ENCODE measurements at regions of chr2 and their contacts with region 1.

Region 1: DNA sequence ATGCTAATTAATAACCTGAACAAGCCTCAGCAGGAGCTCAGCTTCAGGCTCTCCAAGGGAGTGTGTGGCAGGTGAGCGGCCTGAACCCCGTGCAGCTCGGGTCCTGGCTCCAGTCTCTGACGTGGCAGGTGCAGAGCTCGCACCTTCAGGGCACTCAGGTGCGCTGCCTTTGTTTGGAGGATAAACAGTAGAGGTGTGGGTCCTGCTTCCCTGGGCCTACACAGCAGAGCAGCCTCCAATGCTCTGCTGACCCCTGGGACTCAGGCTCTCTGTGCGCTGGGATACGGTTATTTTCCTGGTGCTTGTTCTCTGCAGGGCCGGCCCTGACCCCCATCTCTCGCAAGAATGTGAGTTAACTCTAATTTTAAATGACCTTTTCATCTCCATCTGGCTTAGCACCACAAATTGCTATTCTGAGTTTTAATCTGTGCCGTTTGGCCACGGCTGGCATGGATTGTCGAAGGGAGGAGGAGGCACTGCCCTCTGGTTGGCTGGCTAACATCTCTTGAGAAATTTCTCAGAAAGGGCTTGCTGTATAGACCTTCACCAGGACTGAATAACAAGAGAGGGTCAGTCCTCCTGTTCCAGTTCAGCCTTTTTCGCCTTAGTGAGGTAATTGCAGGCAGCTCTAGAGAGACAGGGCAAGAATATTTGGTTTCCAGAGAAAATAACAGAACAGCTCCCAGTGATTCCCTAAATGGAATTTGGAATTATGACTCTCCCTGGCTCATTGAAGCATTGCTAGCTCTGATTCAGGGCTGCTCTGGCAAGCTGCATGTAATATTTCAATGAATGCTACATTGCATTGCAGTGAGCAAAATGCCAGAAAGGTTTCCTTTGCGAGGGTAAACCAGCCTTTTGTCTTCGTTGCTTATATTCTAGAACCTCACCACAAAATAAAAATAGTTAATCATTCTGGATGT is 161.8 kb downstream of the DCDC2C start:
- DNase-seq: no peak
- ATAC-seq: no peak
- H3K4me3 Mint-ChIP-seq: no peak overlapping the region
- H3K27ac Mint-ChIP-seq: no peak overlapping the region
- H3K4me1 Mint-ChIP-seq: no peaks in the 10 kb centered on the region
- H3K27me3 Mint-ChIP-seq: no peaks in the 10 kb centered on the region
- CTCF ChIP-seq: no peak

Region 2: GRCh38 chr2:3761272-3761671 is 103.9 kb before region 1 on chr2:
- CTCF ChIA-PET with region 1: no interaction called
- POLR2A ChIA-PET with region 1: interaction called, 10 read pairs
- intact Hi-C with region 1: no loop called
- DNase-seq: no peak
- ATAC-seq: no peak
- H3K4me3 Mint-ChIP-seq: no peak overlapping the region
- H3K27ac Mint-ChIP-seq: no peak overlapping the region
- H3K4me1 Mint-ChIP-seq: no peaks in the 10 kb centered on the region
- H3K27me3 Mint-ChIP-seq: peaks cover 5% of the 10 kb centered on the region
- CTCF ChIP-seq: no peak